PC-3 (cell line): ENCODE measurements at regions of chr2 and their contacts with region 1.

Region 1: GRCh38 chr2:188512456-188512855 is 220.8 kb downstream of the GULP1 start:
- DNase-seq: peak; percentile 65
- ATAC-seq: peak; percentile 71
- H3K4me3 ChIP-seq: no peak overlapping the region
- H3K27ac ChIP-seq: no peak overlapping the region
- H3K4me1 ChIP-seq: no peaks in the 10 kb centered on the region
- H3K27me3 ChIP-seq: no peaks in the 10 kb centered on the region
- CTCF ChIP-seq: peak; percentile 82

Region 2: GRCh38 chr2:187594801-187595200 is 917.7 kb before region 1 on chr2:
- CTCF ChIA-PET with region 1: no interaction called
- POLR2A ChIA-PET with region 1: no interaction called
- intact Hi-C with region 1: loop called (anchors 5 kb)
- DNase-seq: no peak
- ATAC-seq: no peak
- H3K4me3 ChIP-seq: no peak overlapping the region
- H3K27ac ChIP-seq: no peak overlapping the region
- H3K4me1 ChIP-seq: no peaks in the 10 kb centered on the region
- H3K27me3 ChIP-seq: no peaks in the 10 kb centered on the region
- CTCF ChIP-seq: peak; percentile 45; the same call in 1 of the 2 replicates

Region 3: GRCh38 chr2:187842978-187843847 is 669.2 kb before region 1 on chr2:
- CTCF ChIA-PET with region 1: no interaction called
- POLR2A ChIA-PET with region 1: no interaction called
- intact Hi-C with region 1: loop called (anchors 5 kb)
- DNase-seq: peak; percentile 86
- ATAC-seq: peak; percentile 79
- H3K4me3 ChIP-seq: no peak overlapping the region
- H3K27ac ChIP-seq: no peak overlapping the region
- H3K4me1 ChIP-seq: no peaks in the 10 kb centered on the region
- H3K27me3 ChIP-seq: no peaks in the 10 kb centered on the region
- CTCF ChIP-seq: peak; percentile 79

Region 4: GRCh38 chr2:188369365-188369764 is 143.1 kb before region 1 on chr2:
- CTCF ChIA-PET with region 1: no interaction called
- POLR2A ChIA-PET with region 1: no interaction called
- intact Hi-C with region 1: loop called (anchors 10 kb)
- DNase-seq: peak; percentile 82
- ATAC-seq: peak; percentile 88
- H3K4me3 ChIP-seq: no peak overlapping the region
- H3K27ac ChIP-seq: no peak overlapping the region
- H3K4me1 ChIP-seq: no peaks in the 10 kb centered on the region
- H3K27me3 ChIP-seq: no peaks in the 10 kb centered on the region
- CTCF ChIP-seq: peak; percentile 91